A549 (cell line): ENCODE measurements at regions of chr9 and their contacts with region 1.

Region 1: DNA sequence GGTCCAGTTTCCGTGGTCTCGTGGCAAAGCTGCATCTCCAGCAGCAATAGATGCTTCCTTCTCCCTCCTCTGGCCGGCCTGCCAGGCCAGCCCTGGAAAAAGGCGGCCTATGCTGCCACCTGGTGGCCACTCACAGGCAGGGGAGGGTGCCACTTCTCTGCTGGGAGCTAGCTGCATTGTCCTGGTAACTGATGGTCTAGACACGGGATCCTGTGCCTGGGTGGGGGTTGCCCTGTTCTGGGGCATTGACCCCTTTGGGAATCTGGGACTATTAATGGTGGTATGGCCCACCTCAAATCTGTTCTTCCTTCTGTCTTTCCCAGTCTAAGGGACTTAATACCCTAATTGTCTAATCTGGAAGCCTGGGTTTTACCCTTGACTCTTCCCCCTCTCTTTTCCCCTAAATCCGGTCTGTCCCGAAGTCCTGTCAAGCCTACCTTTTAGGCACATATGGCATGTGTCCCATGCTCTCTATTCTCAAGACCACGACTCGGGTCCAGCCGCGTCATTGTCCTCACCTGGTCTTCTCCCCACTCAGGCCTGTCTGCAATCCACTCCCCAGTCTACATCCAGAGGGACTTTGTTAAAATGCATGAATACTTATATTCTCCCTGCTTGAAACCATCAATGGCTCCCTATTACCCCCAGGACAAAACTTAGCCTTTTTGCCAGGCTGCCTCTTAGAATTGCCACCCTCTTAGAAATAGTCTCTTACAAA is 20.0 kb upstream of the PTGS1 start:
- DNase-seq: peak; percentile 75 to 84
- ATAC-seq: peak; percentile 94 to 97
- H3K4me3 ChIP-seq: no peak overlapping the region
- H3K27ac ChIP-seq: no peak overlapping the region
- H3K4me1 ChIP-seq: peaks cover 4% of the 10 kb centered on the region; the same call in 2 of the 3 replicates
- CTCF ChIP-seq: peak; percentile 93
- EP300 ChIP-seq: no peak
- POLR2A ChIP-seq: no peak
- RAD21 ChIP-seq: peak; percentile 98

Region 2: DNA sequence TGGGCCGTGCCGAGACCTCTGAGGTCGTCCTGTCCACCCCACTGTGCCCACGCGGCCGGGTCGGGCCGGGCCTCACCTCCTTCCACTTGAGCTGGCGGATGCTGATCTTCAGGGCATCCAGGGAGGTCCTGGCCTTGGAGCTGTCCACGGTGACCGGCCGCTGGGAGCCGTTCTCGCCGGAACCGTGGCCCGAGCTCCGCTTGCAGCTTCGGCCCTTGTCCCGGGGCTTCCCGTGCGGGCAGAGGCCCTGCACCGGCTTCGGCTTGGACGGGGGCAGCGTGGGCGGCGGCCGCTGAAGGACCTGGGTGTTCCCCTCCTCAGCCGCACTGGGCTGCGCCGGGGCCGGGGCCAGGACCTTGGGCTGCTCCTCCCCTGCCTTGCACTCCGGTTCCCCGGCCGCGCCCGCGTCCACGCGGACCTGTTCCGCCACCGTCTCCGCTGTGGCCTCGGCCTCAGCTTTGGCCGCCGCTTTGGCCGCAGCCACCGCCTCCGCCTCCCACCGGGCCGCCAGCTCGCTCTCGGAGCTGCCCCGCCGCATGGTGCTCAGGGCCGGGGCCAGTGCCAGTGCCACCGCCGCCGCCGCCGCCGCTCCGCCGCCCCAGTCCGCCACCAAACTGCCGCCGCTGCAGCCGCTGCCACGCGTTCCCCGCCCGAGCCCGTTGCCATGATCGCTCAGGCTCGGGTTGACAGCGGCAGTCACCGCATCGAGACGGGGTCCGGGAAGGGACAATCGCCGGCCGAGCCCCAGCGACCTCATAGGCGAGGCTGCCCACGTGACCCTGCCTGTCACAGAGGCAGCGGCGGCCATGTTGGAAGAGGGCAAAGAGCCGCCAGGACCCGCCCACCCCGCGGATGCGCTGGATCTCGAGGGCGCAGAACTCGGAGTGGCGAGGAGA is 257.9 kb before region 1 on chr9 and contains the start of gene TTLL11:
- CTCF ChIA-PET with region 1: interaction called, 232 read pairs
- POLR2A ChIA-PET with region 1: no interaction called
- DNase-seq: peak; percentile 91 to 93
- ATAC-seq: peak; percentile 92 to 96
- H3K4me3 ChIP-seq: peak within 1 kb of the TSS; percentile 84
- H3K27ac ChIP-seq: peak within 1 kb of the TSS; percentile 67 to 85
- H3K4me1 ChIP-seq: peaks cover 10% of the 10 kb centered on the region; the same call in 2 of the 3 replicates
- CTCF ChIP-seq: no peak
- EP300 ChIP-seq: no peak
- POLR2A ChIP-seq: peak; percentile 27
- RAD21 ChIP-seq: no peak
- polyA plus RNA-seq, gene TTLL11: 2.6 and 3.0 TPM in 2 replicates

Region 3: GRCh38 chr9:122131401-122132001 is 219.3 kb before region 1 on chr9:
- CTCF ChIA-PET with region 1: interaction called, 541 read pairs
- POLR2A ChIA-PET with region 1: no interaction called
- DNase-seq: no peak
- ATAC-seq: peak in 1 of 2 experiments; percentile 17; a peak in 1 of 6 replicates
- H3K4me3 ChIP-seq: no peak overlapping the region
- H3K27ac ChIP-seq: no peak overlapping the region
- H3K4me1 ChIP-seq: no peaks in the 10 kb centered on the region; the same call in 2 of the 3 replicates
- CTCF ChIP-seq: no peak
- EP300 ChIP-seq: no peak
- POLR2A ChIP-seq: no peak
- RAD21 ChIP-seq: no peak

Region 4: GRCh38 chr9:122286764-122287163 is 64.0 kb before region 1 on chr9:
- CTCF ChIA-PET with region 1: interaction called, 10 read pairs
- POLR2A ChIA-PET with region 1: no interaction called
- DNase-seq: no peak
- ATAC-seq: no peak
- H3K4me3 ChIP-seq: no peak overlapping the region
- H3K27ac ChIP-seq: no peak overlapping the region
- H3K4me1 ChIP-seq: no peaks in the 10 kb centered on the region
- CTCF ChIP-seq: no peak
- EP300 ChIP-seq: no peak
- POLR2A ChIP-seq: no peak
- RAD21 ChIP-seq: no peak

Region 5: DNA sequence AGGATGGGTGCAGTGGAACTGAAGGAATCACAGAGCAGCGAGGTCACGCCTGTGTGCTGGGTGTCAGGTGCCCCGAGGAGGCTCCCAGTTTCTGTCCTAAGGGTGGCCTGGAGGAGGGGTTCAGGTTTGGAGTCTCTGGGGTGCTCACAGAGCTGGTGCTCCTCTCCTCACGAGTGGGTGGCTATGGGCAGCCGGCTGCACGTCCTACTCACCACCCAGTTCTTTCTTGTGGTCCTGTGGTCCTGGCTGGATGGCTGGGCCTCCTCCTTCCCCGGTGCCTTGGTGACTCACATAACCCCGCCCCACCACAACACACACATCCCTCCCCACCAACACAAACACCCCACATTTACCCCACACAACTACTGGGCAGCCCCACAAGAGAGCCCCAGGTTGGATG is 10.1 kb after region 1 on chr9:
- CTCF ChIA-PET with region 1: interaction called, 27 read pairs
- POLR2A ChIA-PET with region 1: no interaction called
- DNase-seq: no peak
- ATAC-seq: peak in 1 of 2 experiments; percentile 32; a peak in 3 of 6 replicates
- H3K4me3 ChIP-seq: no peak overlapping the region
- H3K27ac ChIP-seq: peak overlapping the region in 1 of 2 experiments; percentile 7; a peak in 1 of 6 replicates
- H3K4me1 ChIP-seq: peaks cover 10% of the 10 kb centered on the region; the same call in 2 of the 3 replicates
- CTCF ChIP-seq: no peak
- EP300 ChIP-seq: no peak
- POLR2A ChIP-seq: no peak
- RAD21 ChIP-seq: no peak